GM13977 (cell line): ENCODE measurements at regions of chr14 and their contacts with region 1.

Region 1: GRCh38 chr14:89430391-89431236 is 13.6 kb upstream of the FOXN3 start:
- DNase-seq: peak; percentile 88
- CTCF ChIP-seq: no peak

Region 2: DNA sequence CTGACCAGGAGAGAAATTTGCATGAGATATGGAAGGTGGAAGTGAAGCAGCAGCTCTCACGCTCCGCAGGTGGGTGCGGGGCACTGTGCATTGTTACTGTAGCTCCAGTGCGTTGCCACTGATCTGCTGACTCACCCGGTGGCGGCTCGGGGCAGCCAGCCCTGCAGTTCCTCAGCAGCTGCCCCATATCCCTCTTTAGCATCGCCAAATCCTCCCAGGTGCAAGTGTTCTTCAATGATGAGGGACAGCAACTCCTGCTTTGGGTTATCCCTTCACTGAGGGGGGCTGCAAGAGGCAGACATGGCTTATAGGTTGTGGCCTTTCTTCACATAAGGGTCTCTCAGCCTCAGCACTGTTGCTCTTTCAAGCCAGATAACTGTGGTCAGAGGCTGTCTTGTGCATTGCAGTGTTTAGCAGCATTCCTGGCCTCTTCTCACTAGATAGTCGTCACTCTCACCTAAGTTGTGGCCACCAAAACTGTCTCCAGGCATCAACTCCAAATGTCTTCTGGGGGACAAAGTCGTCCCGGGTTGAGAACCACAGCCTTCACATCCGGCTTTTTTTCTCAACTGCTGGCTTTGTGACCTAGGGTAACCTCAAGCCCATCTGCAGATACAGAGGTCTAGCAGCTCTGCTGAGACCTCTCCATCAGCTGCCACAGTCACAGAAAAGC is 343.2 kb after region 1 on chr14:
- in situ Hi-C with region 1: loop called (anchors 10 kb)
- DNase-seq: peak; percentile 52
- CTCF ChIP-seq: no peak

Region 3: GRCh38 chr14:89915114-89915878 is 484.7 kb after region 1 on chr14:
- in situ Hi-C with region 1: loop called (anchors 25 kb)
- DNase-seq: peak; percentile 58
- CTCF ChIP-seq: peak; percentile 83